ENCODE measurements at regions of chr17 and their contacts with region 1.

Region 1: DNA sequence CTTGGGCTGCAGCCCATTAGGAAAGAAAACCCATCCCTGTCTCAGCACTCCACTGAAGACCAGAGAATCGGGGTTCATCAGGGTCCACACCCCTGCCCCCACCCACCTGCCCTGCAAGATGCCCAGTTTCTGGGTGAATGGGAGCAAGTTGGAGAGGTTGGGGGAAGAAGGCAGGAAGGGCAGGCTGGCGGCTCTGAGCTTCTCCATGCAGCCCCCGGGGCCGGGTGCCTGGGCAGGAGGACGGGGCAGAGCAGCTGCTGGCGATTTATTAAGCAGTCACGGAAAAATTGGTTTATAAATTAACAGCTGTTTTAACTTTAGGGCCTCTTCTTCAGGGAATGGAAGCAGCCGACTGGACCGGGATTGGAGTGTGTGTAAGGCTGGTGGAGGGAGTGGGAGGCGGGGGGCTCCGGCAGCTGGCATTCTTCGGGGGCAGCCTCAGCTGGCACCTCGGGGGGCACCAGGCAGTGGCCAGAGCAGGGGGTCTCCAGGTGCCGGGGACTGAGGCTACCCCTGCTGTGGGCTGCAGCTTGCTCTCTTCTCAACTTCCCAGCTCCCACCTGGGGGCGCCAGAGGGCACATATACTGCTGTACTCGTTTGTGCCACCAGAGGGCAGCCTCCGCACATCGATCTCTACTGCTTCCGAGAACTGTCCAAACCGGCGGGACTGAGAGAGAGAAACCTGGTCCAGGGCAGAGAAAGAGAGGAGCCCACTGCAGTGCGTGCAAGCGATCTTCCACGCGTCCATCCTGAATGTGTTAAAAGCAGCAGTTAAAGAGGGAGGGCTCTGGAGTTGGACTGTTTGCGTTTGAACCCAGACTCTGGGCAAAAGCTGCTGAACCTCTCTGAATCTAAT is 5.0 kb upstream of the PPP1R1B start:
- DNase-seq: peak; percentile 91
- ATAC-seq: peak; percentile 73
- H3K4me3 Mint-ChIP-seq: peak overlapping the region; percentile 62
- H3K27ac Mint-ChIP-seq: peak overlapping the region; percentile 79
- H3K4me1 Mint-ChIP-seq: peaks cover 27% of the 10 kb centered on the region
- H3K27me3 Mint-ChIP-seq: peaks cover 39% of the 10 kb centered on the region

Region 2: DNA sequence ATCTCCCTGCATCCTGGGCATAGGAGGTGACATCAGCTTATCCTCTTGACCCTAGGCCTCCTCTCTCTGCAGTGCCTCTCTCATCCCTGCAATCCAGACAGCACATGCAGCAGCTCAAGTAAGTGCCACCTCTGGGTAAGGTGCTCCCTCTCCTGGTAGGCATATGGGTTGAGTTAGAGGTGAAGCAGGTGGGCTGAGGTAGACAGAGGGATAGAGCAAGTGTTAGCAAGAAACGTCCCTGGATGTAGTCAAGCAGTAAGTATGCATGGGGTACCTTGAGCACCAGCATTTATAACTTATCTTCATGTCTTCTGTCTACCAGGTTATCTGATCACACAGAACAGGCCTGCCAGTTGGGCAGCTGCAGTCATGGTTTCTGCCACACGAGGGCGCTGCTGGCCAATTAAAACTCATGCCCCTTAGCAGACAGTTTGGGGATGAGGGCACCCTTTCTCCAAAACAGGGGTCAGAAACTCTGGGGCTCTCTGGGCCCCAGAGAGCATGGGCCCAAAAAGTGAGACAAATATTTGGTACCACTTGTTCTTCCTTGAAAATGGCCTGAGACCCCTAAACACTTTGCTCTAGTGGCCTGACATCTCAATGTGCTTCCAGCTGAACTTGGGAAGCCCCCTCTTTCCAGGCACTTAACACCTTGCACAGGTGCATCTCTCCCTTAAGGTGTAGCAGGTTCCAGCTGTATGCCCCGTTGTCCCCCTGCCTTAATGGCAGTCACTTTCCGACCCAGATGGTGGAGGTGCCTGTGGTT is 73.9 kb before region 1 on chr17:
- CTCF ChIA-PET with region 1: interaction called, 105 read pairs
- POLR2A ChIA-PET with region 1: no interaction called
- DNase-seq: peak; percentile 80
- ATAC-seq: peak; percentile 86
- H3K4me3 Mint-ChIP-seq: no peak overlapping the region
- H3K27ac Mint-ChIP-seq: no peak overlapping the region
- H3K4me1 Mint-ChIP-seq: no peaks in the 10 kb centered on the region
- H3K27me3 Mint-ChIP-seq: no peaks in the 10 kb centered on the region

Region 3: DNA sequence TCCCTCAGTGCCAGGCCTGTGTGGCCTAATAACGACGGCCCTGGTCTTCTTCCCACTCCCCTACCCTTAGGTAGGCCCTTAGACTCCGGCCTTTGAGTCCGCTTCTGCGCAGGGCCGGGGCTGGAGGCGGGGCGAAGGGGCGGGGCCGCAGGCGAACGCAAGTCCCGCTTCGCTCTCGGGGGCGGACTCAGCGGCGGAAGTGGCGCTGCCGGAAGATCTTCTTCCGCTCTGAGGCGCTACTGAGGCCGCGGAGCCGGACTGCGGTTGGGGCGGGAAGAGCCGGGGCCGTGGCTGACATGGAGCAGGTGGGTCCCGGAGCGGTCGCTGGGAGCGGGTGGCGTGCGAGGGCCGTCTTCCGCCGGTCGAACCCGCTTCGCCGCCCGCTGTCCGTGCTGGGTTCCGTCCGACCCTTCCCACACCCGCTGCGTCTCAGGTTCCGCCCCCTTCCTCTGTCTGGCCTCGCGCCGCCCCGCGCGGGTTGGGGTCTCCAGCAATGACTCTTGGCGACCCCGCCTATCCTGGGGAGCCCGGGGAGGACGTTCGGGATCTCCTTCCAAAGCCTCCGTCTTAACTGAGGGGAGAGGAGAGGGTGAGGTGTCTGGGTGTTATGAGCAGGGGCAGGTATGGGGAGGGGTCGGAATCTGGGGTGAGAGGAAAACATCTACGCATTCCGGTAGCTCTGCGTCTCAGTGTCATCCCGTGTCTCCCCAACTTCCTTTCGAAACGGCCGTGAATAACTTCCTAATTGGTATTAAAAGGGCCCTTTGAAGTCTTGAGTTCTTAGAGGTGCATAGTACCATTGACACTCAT is 15.4 kb after region 1 on chr17 and contains the start of gene STARD3:
- CTCF ChIA-PET with region 1: interaction called, 189 read pairs
- POLR2A ChIA-PET with region 1: interaction called, 3 read pairs
- DNase-seq: peak; percentile 94
- ATAC-seq: peak; percentile 90
- H3K4me3 Mint-ChIP-seq: peak within 1 kb of the TSS; percentile 92
- H3K27ac Mint-ChIP-seq: peak within 1 kb of the TSS; percentile 81
- H3K4me1 Mint-ChIP-seq: peaks cover 68% of the 10 kb centered on the region
- H3K27me3 Mint-ChIP-seq: no peaks in the 10 kb centered on the region
- total RNA-seq, gene STARD3: 69.0 to 72.1 TPM

Region 4: DNA sequence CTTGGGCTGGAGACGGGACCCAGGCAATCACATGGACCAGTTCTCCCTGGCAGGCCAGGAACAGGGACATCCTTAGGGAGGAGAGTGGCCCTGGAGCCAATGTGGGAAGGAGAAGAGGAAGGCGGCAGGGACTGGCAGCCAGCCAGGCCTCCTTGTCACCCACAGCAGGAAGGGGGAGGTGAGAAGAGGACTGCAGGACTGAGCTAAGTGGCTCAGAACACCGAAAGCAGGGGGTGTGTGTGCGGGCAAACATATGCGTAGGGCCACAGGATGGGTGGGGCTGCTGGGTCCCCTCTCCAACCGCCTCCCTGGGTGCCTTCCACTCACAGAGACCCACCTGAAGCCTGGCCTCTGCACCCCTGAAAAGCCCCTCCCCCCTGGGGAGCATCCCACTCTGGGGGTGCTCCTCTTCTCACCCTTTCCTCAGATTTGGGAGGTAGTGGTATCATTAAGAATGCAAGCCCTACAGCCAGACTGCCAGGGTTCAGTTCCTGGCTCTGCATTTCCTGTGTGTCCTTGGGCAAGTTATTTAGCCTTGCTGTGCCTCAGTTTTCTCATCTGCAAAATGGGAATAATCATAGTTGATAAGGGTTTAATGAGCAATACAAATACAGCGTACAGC is 54.6 kb after region 1 on chr17:
- CTCF ChIA-PET with region 1: interaction called, 195 read pairs
- POLR2A ChIA-PET with region 1: interaction called, 3 read pairs
- DNase-seq: peak; percentile 80
- ATAC-seq: peak; percentile 76
- H3K4me3 Mint-ChIP-seq: no peak overlapping the region
- H3K27ac Mint-ChIP-seq: peak overlapping the region; percentile 87
- H3K4me1 Mint-ChIP-seq: peaks cover 63% of the 10 kb centered on the region
- H3K27me3 Mint-ChIP-seq: peaks cover 3% of the 10 kb centered on the region

Region 5: GRCh38 chr17:39702901-39703893 is 81.4 kb after region 1 on chr17:
- CTCF ChIA-PET with region 1: interaction called, 15 read pairs
- POLR2A ChIA-PET with region 1: interaction called, 3 read pairs
- DNase-seq: no peak
- ATAC-seq: no peak
- H3K4me3 Mint-ChIP-seq: no peak overlapping the region
- H3K27ac Mint-ChIP-seq: no peak overlapping the region
- H3K4me1 Mint-ChIP-seq: peaks cover 18% of the 10 kb centered on the region
- H3K27me3 Mint-ChIP-seq: peaks cover 25% of the 10 kb centered on the region

Region 6: GRCh38 chr17:39754161-39754951 is 132.6 kb after region 1 on chr17:
- CTCF ChIA-PET with region 1: interaction called, 81 read pairs
- POLR2A ChIA-PET with region 1: interaction called, 5 read pairs
- DNase-seq: peak; percentile 97
- ATAC-seq: peak; percentile 85
- H3K4me3 Mint-ChIP-seq: peak overlapping the region; percentile 79
- H3K27ac Mint-ChIP-seq: peak overlapping the region; percentile 83
- H3K4me1 Mint-ChIP-seq: peaks cover 63% of the 10 kb centered on the region
- H3K27me3 Mint-ChIP-seq: no peaks in the 10 kb centered on the region

Region 7: DNA sequence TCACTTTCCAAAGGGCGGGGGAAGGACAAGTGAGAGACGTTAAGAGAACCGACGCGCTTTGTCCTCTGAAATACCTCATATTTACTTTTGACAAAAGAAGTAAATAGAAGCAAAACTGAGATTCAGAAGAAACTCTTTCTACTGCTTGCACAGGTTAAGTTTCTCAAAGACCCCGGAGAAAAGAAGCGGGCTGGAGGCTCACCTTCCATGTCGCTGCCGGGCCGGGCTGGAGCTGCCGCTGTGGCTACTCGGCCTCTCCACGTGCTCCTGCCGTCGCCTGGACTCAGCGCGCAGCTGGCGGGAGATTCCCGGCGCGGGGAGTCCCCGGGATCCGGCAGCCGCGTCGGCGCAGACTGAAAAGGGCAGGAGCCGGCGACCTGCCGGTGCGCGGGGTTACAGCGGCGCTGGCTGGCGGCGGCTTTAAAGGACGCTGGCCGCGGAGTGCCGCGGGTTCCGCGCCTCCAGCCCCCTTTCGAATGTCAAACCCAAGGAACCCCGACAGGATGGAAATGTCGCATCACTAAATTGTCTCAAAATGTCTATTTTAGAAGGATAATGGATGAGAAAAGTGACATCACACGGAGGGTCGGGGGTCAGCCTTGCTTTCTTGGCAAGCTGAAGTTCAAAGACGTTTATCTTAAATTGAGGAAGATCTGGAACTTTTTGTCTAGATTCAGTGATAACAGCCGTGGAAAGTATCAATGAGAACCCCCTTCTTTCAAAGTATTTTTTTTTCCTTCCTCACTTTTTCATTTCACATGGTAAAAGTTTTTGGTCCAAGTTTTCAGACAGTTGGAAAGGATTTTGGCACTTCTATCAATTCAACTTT is 242.4 kb after region 1 on chr17 and contains the start of gene IKZF3:
- CTCF ChIA-PET with region 1: interaction called, 25 read pairs
- POLR2A ChIA-PET with region 1: no interaction called
- DNase-seq: peak; percentile 75
- ATAC-seq: peak; percentile 74
- H3K4me3 Mint-ChIP-seq: peak within 1 kb of the TSS; percentile 84
- H3K27ac Mint-ChIP-seq: peak within 1 kb of the TSS; percentile 89
- H3K4me1 Mint-ChIP-seq: peaks cover 60% of the 10 kb centered on the region
- H3K27me3 Mint-ChIP-seq: no peaks in the 10 kb centered on the region
- total RNA-seq, gene IKZF3: 31.1 to 31.9 TPM

Measured in activated CD8-positive, alpha-beta T cell treated with anti-CD3 and anti-CD28 coated beads, Interleukin-2, amount 10 ng/mL, durations not matched to agents 7 days and 5 days (primary cell).